Mucosa of descending colon (tissue), 3 donors: ENCODE measurements at regions of chr1 and their contacts with region 1.

Region 1: GRCh38 chr1:84620720-84621313 is 46.6 kb upstream of the CTBS start:
- DNase-seq: peak; percentile 75 to 89 (median 83)
- ATAC-seq: peak; percentile 98
- H3K4me3 ChIP-seq: peak overlapping the region; percentile 32
- H3K4me1 ChIP-seq: no peaks in the 10 kb centered on the region
- CTCF ChIP-seq: peak; percentile 95

Region 2: DNA sequence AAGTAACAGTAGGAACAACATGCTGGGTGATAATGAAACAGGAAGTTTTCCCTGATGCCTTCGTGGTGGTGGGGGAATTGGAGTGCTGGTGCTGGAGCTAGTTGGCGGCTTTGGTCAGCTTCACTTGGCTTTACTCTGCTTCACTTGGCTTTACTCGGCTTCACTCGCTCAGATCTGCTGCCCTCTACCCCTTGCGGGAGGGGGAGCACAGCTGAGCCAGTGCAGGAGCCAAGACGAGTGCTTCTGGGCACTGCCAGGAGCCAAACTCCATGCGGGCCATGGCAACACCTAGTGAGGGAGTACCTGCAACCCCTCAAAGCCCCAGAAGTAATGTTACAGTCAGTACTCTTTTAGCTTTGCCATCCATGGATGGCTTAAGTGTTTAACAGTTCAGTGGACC is 487.3 kb before region 1 on chr1:
- intact Hi-C with region 1: no loop called
- DNase-seq: no peak
- ATAC-seq: no peak
- H3K4me3 ChIP-seq: no peak overlapping the region
- H3K4me1 ChIP-seq: no peaks in the 10 kb centered on the region
- CTCF ChIP-seq: no peak

Region 3: DNA sequence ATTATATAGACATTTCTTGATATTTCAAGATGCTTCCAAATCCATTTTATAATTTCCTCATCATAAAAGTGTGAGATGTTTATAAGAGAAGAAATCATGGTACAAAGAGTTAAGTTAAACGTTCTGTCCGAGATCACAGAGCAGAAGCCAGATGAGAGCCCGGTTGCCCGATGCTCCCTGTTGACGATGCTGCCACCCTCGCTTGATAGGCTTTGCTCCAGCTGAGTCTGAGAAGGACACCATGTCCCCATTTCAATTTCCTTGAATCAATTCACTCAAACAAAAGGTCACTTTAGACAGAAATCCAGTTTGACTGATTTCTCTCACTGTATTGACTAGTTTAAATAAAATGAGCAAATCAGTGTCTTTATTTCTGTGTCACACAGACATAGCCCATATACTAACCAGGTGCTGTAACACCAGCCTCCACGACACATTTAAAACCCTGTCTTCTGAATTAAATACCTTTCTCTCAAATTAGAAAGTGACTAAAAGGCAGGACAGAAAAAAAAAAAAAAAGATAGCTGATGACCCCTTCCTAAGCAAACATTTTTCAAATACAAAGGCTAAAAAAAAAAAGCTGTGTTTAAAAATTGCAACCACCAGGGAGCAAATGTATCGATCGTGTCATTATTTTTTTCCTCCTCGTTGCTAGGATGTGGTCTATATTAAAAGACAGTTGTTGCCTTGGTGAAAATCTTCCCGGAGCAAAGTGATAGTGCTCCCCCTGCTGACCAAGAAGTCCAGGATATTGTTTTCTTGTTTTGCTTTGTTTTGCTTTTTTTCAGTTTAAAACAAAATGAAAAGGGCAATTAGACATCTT is 187.3 kb before region 1 on chr1:
- intact Hi-C with region 1: loop called in 1 of 2 experiments (anchors 10 kb)
- DNase-seq: peak; percentile 61 to 86 (median 65)
- ATAC-seq: peak; percentile 92
- H3K4me3 ChIP-seq: no peak overlapping the region
- H3K4me1 ChIP-seq: peaks cover 6% of the 10 kb centered on the region
- CTCF ChIP-seq: peak; percentile 45

Region 4: GRCh38 chr1:84753516-84754385 is 132.9 kb after region 1 on chr1:
- intact Hi-C with region 1: loop called in 1 of 2 experiments (anchors 10 kb)
- DNase-seq: peak; percentile 57 to 79 (median 79)
- ATAC-seq: peak; percentile 89
- H3K4me3 ChIP-seq: no peak overlapping the region
- H3K4me1 ChIP-seq: peaks cover under 1% of the 10 kb centered on the region
- CTCF ChIP-seq: peak; percentile 88

Region 5: DNA sequence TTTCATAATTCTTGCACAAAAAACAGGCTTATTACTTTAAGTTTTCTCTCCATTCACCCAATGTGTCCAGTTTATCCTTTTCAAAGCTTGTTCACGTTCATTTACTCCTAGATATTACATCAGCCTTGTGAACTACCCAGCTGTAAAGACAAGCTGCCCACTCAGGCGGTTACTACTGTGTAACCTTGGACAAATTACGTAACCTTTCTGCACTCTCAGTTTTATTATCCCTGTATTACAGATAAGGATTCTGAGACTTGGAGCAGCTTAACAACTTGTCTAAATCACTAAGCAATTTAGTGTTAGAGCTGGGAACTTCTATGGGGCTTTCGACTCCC is 292.7 kb after region 1 on chr1:
- intact Hi-C with region 1: no loop called
- DNase-seq: peak in 1 of 3 donors; percentile 31
- ATAC-seq: peak; percentile 99
- H3K4me3 ChIP-seq: no peak overlapping the region
- H3K4me1 ChIP-seq: no peaks in the 10 kb centered on the region
- CTCF ChIP-seq: no peak